ENCODE measurements at regions of chr16 and their contacts with region 1.

Region 1: DNA sequence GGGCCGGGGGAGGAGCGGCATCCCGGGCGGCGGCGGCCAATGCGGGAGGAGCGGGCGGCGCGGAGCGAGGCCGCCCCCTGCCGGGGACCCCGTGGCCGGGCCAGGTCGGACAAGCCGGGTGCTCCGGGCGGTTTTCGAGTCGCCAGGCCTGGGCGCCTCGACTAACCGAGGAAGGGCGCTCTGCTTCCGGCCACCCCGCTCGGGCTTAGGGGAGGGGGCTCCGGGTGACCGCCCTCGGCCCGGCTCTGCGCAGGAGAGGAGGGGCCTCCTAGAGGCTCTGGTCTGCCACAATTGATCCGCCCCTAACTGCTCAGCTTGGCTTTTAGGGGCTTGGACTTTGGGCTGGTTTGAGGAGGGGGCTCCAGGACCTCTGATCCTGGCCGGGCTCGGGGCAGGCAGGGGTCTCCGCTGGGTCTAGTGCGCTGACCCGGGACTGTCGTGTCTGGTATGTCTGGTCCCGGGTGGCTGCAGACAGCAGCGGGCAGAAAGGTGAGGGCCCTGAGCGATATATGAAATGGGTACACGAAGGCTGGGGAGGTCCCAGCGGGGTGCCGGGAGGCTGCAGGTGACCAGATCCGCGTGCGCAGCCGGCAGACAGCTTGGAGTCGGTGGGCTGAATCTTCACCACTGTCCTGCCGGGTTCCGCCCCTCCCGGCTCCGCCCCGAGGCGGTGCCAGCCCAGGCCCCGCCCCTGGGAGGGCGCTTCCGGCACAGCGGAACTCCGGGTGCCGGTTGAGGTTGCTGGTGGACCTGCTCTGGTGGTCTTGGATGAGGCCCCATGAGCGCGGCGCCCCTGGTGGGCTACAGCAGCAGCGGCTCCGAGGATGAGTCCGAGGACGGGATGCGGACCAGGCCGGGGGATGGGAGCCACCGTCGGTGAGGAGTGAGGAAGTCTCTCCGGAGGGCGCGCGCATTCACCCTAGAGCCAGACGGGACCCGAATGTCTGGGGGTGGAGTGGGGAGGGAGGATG is at the start of gene USB1:
- DNase-seq: peak; percentile 88
- ATAC-seq: peak; percentile 92
- H3K4me3 ChIP-seq: peak within 1 kb of the TSS; percentile 85 to 98 (median 93)
- H3K27ac ChIP-seq: peak within 1 kb of the TSS; percentile 81
- H3K4me1 ChIP-seq: peaks cover 34% of the 10 kb centered on the region
- H3K27me3 ChIP-seq: no peaks in the 10 kb centered on the region; a peak in 1 of 5 replicates
- CTCF ChIP-seq: peak; percentile 72
- EP300 ChIP-seq: 0 out of 4 replicates have a peak, but pooled peaks of 1 of the 2 experiments have one; percentile 9
- POLR2A ChIP-seq: peak; percentile 68 to 91
- RAD21 ChIP-seq: peak; percentile 85
- total RNA-seq, gene USB1: 16.7 and 33.5 TPM in 2 replicates

Region 2: GRCh38 chr16:57757326-57757786 is 243.6 kb before region 1 on chr16:
- CTCF ChIA-PET with region 1: interaction called, 5 read pairs
- POLR2A ChIA-PET with region 1: no interaction called
- in situ Hi-C with region 1: loop called (anchors 5 kb)
- intact Hi-C with region 1: loop called (anchors 1 kb)
- DNase-seq: peak; percentile 73
- ATAC-seq: peak; percentile 87
- H3K4me3 ChIP-seq: no peak overlapping the region
- H3K27ac ChIP-seq: peak overlapping the region; percentile 3
- H3K4me1 ChIP-seq: no peaks in the 10 kb centered on the region
- H3K27me3 ChIP-seq: no peaks in the 10 kb centered on the region
- CTCF ChIP-seq: peak; percentile 99
- EP300 ChIP-seq: no peak
- POLR2A ChIP-seq: no peak
- RAD21 ChIP-seq: peak; percentile 97

Region 3: GRCh38 chr16:57899771-57900661 is 101.0 kb before region 1 on chr16:
- CTCF ChIA-PET with region 1: interaction called, 14 read pairs
- POLR2A ChIA-PET with region 1: interaction called, 4 read pairs
- in situ Hi-C with region 1: loop called (anchors 5 kb)
- intact Hi-C with region 1: loop called (anchors 1 kb)
- DNase-seq: peak; percentile 60
- ATAC-seq: peak; percentile 52
- H3K4me3 ChIP-seq: peak overlapping the region in 2 of 3 experiments; percentile 18 to 37; a peak in 4 of 6 replicates
- H3K27ac ChIP-seq: no peak overlapping the region
- H3K4me1 ChIP-seq: peaks cover 82% of the 10 kb centered on the region
- H3K27me3 ChIP-seq: peaks cover 12 to 38% of the 10 kb centered on the region in 2 experiments; a peak in 4 of 5 replicates
- CTCF ChIP-seq: peak; percentile 93
- EP300 ChIP-seq: peak in 1 of 2 experiments; percentile 27; a peak in 1 of 4 replicates
- POLR2A ChIP-seq: no peak
- RAD21 ChIP-seq: peak; percentile 82